Right ventricle myocardium inferior (tissue), 1 donor: ENCODE measurements at regions of chr19 and their contacts with region 1.

Region 1: DNA sequence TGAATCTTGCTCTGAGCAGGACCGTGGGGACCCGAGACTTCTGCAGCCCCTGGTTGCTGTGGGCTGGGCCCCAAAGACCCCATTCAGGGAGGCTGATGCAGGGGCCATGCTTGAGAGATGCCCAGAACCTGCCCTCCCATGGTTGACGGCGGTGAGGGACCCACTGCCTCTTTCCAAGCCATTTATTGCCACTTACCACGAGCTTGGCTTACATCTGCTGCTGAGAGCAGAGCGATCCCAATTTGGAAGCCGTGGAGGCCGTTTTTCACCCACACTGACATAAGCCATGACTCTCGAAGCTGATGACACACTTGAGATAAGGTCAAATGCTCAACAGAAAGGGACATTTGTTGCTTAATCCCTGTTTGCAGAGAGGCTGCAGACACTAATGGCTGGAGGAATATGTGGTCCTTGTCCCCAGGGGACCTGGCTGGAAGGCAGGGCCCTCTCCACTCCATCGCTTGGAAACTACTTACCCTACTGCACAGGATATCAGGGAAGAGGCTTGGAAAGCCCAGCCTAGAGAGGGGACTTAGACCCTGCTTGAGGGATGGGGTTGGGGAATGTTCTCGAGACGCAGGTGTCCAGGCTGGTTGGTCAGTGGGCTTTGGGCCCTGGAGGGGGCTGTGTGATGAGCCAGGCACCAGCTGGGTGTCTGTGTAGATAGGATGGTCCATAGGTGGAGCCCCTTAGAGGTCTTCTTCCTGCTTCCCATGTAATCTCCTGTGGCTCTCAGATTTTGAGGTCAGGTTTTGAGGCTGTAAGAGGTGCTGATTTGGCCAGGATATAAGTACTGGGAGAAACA is 15.3 kb downstream of the ZNF536 start:
- DNase-seq: no peak
- ATAC-seq: peak; percentile 91

Region 2: DNA sequence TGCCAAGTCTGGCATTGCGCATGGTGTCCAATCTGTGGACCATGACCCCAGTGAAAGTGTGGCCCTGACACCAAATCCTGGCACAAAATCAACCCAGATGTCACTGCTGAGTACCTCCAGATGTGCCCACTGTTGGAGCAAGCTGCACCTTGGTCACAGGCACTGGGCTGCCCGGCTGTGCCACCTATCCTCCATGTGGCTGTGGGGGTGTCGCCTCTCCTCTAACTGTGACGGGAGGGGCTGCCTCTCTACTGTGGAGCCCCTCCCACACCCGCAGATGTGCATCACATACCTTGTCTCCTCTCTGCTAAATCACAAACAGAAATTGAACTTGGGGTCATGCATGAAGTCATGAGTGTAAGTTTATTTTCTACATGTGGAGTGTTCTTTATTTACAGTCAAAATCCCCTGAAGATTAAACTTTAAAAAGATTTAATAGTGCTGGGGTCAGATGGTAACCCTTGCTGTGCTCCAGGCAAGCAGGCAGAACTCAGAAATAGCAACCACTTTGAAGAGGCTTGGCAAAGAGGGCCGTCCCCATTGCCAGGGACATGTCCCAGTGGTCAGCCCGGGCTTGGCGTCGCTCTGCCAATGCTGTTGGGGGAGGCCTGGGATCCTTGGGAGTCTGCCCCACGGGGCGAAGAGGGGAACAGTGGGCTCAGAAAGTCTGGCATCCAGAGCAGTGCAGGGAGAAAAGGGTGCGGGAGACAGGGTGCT is 61.7 kb before region 1 on chr19:
- intact Hi-C with region 1: loop called (anchors 5 kb)
- DNase-seq: peak; percentile 70
- ATAC-seq: peak; percentile 85